Naive thymus-derived CD4-positive, alpha-beta T cell (primary cell): ENCODE measurements at regions of chr2 and their contacts with region 1.

Region 1: DNA sequence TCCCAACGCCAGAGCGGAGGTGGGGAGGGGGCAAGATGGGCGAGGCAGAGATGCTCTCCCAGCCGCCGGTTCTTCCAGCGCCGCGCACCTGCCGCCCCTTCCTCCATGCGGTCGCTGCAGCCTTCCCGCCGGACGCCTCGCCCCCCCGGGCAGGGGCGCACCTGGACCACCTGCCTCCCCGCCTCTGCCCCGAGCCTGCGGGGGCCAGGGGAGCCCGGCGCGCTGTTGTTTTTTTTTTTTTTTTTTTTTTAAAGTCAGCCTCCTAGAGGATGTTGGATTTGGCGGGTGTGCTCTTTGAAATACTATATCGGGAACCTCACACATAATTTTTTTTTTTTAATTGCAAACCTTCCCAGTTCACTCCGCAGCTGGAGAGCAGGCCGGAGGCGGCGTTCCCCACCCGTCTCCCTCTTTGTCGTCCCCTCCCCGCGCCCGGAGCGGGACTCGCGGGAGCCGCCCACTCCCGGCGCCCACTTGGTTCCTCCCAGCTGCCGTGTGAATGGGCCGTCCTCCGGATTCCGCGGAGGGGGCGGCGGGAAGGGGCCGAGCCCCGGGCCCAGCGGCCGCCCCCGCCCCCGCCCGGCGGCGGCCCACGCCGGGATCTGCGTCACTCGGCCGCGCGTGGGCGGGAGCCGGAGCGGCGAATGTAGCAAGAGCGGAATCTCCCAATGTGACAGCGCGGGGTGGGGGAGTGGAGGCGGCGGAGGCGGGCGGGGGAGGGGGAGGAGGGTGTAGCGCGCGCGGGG is 421 bp upstream of the NAB1 start:
- DNase-seq: peak; percentile 83 to 93 (median 89)
- ATAC-seq: peak; percentile 91
- H3K4me3 ChIP-seq: peak overlapping the region; percentile 62
- H3K4me3 Mint-ChIP-seq: peak overlapping the region; percentile 76 to 92 (median 88)
- H3K27ac ChIP-seq: peak overlapping the region; percentile 92
- H3K27ac Mint-ChIP-seq: peak overlapping the region; percentile 15 to 98 (median 90)
- H3K4me1 ChIP-seq: peaks cover 10 to 16% of the 10 kb centered on the region in 2 donors
- H3K4me1 Mint-ChIP-seq: peaks cover 10 to 54% (median 47%) of the 10 kb centered on the region in 7 donors
- H3K27me3 ChIP-seq: no peaks in the 10 kb centered on the region
- H3K27me3 Mint-ChIP-seq: no peaks in the 10 kb centered on the region

Region 2: GRCh38 chr2:189580658-189581353 is 1067.7 kb before region 1 on chr2 and contains the start of gene SLC40A1:
- CTCF ChIA-PET with region 1: no interaction called
- POLR2A ChIA-PET with region 1: no interaction called
- intact Hi-C with region 1: loop called in 1 of 2 experiments (anchors 10 kb)
- DNase-seq: peak; percentile 54 to 75 (median 66)
- ATAC-seq: peak; percentile 96
- H3K4me3 ChIP-seq: peak within 1 kb of the TSS; percentile 79
- H3K4me3 Mint-ChIP-seq: peak within 1 kb of the TSS; percentile 83 to 100 (median 93)
- H3K27ac ChIP-seq: peak within 1 kb of the TSS; percentile 80
- H3K27ac Mint-ChIP-seq: peak within 1 kb of the TSS; percentile 30 to 98 (median 87)
- H3K4me1 ChIP-seq: peaks cover 0 to 12% of the 10 kb centered on the region in 2 donors
- H3K4me1 Mint-ChIP-seq: peaks cover 24 to 63% (median 56%) of the 10 kb centered on the region in 7 donors
- H3K27me3 ChIP-seq: peaks cover 0 to 5% of the 10 kb centered on the region in 2 donors
- H3K27me3 Mint-ChIP-seq: peaks cover 0 to 47% (median 0%) of the 10 kb centered on the region in 5 donors
- total RNA-seq, gene SLC40A1: 4.2 to 38.0 (median 24.4) TPM

Region 3: DNA sequence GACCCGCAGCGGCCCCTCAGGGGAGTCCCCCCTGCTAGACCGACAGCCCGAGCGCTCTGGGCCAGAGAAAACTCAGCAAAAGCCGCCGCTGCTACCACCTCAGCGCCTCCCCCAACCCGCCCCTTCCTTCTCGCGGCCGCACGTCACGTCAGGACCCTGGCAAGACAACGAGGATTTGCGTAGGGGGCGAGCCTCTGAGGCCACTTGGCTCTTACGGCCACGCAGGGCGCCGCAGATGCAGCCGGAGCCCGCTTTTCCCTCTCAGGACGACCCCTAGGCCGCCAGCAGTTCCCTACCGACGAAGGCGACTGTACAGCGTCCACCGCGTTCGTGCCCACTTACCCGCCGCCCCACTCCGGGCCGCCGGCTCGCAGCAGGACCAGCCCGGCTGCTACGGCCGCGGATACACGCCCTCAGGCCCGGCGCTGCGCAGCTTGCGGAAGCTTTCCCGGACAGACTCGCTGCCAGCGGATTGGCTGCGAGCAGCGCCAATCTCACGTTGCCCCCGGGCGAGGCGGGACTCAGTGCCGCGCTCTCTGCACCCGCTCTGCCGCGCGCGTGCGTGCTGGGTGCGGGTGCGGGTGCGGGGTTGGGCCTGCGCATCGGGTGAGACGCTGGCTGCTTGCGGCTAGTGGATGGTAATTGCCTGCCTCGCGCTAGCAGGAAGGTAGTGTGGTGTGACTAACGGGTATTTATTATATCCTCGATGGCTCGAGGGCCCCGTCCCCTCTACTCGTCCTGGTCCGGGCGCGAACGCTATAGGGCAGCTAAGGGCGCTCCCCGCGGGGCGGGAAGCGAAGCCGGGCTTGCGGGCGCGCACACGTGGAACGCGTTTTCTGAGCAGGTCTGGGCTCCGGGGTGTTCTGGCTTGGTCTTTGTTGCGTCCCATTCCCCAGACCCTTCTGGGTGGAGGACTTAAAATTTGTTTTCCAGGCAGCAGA is 864.3 kb before region 1 on chr2 and contains the starts of genes ORMDL1 and PMS1:
- CTCF ChIA-PET with region 1: no interaction called
- POLR2A ChIA-PET with region 1: no interaction called
- intact Hi-C with region 1: loop called in 1 of 2 experiments (anchors 1 kb)
- DNase-seq: peak; percentile 90 to 96 (median 94)
- ATAC-seq: peak; percentile 95
- H3K4me3 ChIP-seq: peak within 1 kb of the TSS; percentile 76
- H3K4me3 Mint-ChIP-seq: peak within 1 kb of the TSS; percentile 86 to 97 (median 94)
- H3K27ac ChIP-seq: peak within 1 kb of the TSS; percentile 92
- H3K27ac Mint-ChIP-seq: peak within 1 kb of the TSS; percentile 89 to 97 (median 95)
- H3K4me1 ChIP-seq: peaks cover 21 to 24% of the 10 kb centered on the region in 2 donors
- H3K4me1 Mint-ChIP-seq: peaks cover 26 to 72% (median 57%) of the 10 kb centered on the region in 7 donors
- H3K27me3 ChIP-seq: no peaks in the 10 kb centered on the region
- H3K27me3 Mint-ChIP-seq: no peaks in the 10 kb centered on the region
- total RNA-seq, gene ORMDL1: 80.1 to 208 (median 142) TPM
- total RNA-seq, gene PMS1: 18.2 to 30.1 (median 22.5) TPM

Region 4: GRCh38 chr2:190511104-190511503 is 137.4 kb before region 1 on chr2:
- CTCF ChIA-PET with region 1: no interaction called
- POLR2A ChIA-PET with region 1: no interaction called
- intact Hi-C with region 1: loop called (anchors 1 to 5 kb)
- DNase-seq: no peak
- ATAC-seq: no peak
- H3K4me3 ChIP-seq: no peak overlapping the region
- H3K4me3 Mint-ChIP-seq: no peak overlapping the region
- H3K27ac ChIP-seq: no peak overlapping the region
- H3K27ac Mint-ChIP-seq: peak overlapping the region in 4 of 9 donors; percentile 1 to 64 (median 43)
- H3K4me1 ChIP-seq: peaks cover 8 to 10% of the 10 kb centered on the region in 2 donors
- H3K4me1 Mint-ChIP-seq: peaks cover 7 to 36% (median 26%) of the 10 kb centered on the region in 7 donors
- H3K27me3 ChIP-seq: no peaks in the 10 kb centered on the region
- H3K27me3 Mint-ChIP-seq: no peaks in the 10 kb centered on the region

Region 5: DNA sequence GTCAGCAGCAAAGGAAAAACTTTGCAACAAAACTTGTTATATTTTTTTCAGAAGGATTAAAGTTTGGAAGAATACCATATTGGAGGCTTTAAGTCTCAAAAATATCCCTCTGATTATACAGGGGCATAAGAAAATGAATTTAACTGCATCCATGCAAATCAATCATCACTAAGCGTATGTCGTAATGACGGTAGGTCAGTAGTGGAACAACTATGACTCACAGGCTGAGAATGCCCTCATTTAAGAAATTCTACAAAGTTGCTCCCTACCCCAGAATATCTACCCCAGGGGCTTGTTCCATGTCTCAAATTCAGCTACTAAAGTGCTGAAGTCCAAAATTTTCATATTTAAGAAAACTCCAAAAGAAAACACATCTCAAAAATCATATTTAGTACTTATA is 12.1 kb before region 1 on chr2:
- CTCF ChIA-PET with region 1: interaction called, 6 read pairs
- POLR2A ChIA-PET with region 1: interaction called, 3 read pairs
- intact Hi-C with region 1: loop called in 1 of 2 experiments (anchors 1 kb)
- DNase-seq: no peak
- ATAC-seq: no peak
- H3K4me3 ChIP-seq: no peak overlapping the region
- H3K4me3 Mint-ChIP-seq: no peak overlapping the region
- H3K27ac ChIP-seq: no peak overlapping the region
- H3K27ac Mint-ChIP-seq: no peak overlapping the region
- H3K4me1 ChIP-seq: no peaks in the 10 kb centered on the region
- H3K4me1 Mint-ChIP-seq: peaks cover 0 to 4% (median 0%) of the 10 kb centered on the region in 7 donors
- H3K27me3 ChIP-seq: no peaks in the 10 kb centered on the region
- H3K27me3 Mint-ChIP-seq: peaks cover 0 to 2% (median 0%) of the 10 kb centered on the region in 5 donors

Region 6: GRCh38 chr2:190679813-190680591 is 31.5 kb after region 1 on chr2:
- CTCF ChIA-PET with region 1: interaction called, 23 read pairs
- POLR2A ChIA-PET with region 1: interaction called, 6 read pairs
- intact Hi-C with region 1: loop called (anchors 1 kb)
- DNase-seq: peak; percentile 27 to 59 (median 46)
- ATAC-seq: peak; percentile 92
- H3K4me3 ChIP-seq: no peak overlapping the region
- H3K4me3 Mint-ChIP-seq: peak overlapping the region in 2 of 10 donors; percentile 8
- H3K27ac ChIP-seq: no peak overlapping the region
- H3K27ac Mint-ChIP-seq: peak overlapping the region in 7 of 9 donors; percentile 7 to 74 (median 52)
- H3K4me1 ChIP-seq: peaks cover 5 to 10% of the 10 kb centered on the region in 2 donors
- H3K4me1 Mint-ChIP-seq: peaks cover 17 to 49% (median 41%) of the 10 kb centered on the region in 7 donors
- H3K27me3 ChIP-seq: no peaks in the 10 kb centered on the region
- H3K27me3 Mint-ChIP-seq: no peaks in the 10 kb centered on the region